Dendritic cell treated with granulocyte-macrophage colony-stimulating factor and Interleukin-4, amounts not matched to agents 40 ng/mL and 50 ng/mL, for 4 days (primary cell): ENCODE measurements at regions of chr7 and their contacts with region 1.

Region 1: DNA sequence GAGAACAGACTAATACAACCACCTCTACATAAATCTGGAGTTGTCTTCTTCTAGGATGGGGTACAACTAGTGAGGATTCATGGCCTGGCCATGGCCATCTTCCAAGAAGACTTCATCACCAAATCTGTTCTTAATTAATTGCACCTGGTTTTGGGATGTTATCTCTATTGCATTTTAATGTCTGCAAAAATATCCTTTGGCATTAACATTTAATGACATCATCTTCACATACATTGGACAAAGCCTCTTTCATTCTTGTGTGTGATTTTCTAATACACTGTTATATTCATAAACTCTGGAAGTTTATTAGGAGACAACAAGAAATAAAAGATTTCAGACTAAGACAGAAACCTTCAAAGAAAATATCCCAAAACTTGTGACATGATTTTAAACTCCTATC is 124.2 kb upstream of the ABCB5 start:
- H3K4me3 Mint-ChIP-seq: no peak overlapping the region
- H3K27ac Mint-ChIP-seq: no peak overlapping the region
- H3K4me1 Mint-ChIP-seq: no peaks in the 10 kb centered on the region
- H3K27me3 Mint-ChIP-seq: no peaks in the 10 kb centered on the region

Region 2: DNA sequence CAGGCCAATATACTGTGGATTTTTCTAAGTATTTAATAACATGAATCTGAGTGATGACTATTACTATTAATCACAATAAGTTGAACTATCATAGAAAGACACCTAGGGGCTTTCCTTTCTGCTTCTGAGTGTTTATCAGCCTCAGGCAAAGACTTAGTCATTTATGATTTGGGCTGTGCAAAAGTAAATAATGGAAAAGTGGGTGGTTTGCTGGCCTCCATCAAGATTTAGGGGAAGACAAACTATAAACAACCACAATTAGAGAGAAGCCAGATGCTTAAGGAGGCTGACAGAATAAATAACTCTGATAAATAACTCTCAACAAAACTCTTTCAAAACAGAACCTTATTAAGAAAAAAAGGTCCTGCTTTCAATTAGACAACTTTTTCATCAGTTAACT is 338.8 kb before region 1 on chr7:
- intact Hi-C with region 1: no loop called
- H3K4me3 Mint-ChIP-seq: no peak overlapping the region
- H3K27ac Mint-ChIP-seq: no peak overlapping the region
- H3K4me1 Mint-ChIP-seq: peaks cover 24% of the 10 kb centered on the region
- H3K27me3 Mint-ChIP-seq: no peaks in the 10 kb centered on the region

Region 3: GRCh38 chr7:20412032-20412431 is 79.3 kb before region 1 on chr7:
- intact Hi-C with region 1: loop called (anchors 5 kb)
- H3K4me3 Mint-ChIP-seq: no peak overlapping the region
- H3K27ac Mint-ChIP-seq: no peak overlapping the region
- H3K4me1 Mint-ChIP-seq: peaks cover 14% of the 10 kb centered on the region
- H3K27me3 Mint-ChIP-seq: no peaks in the 10 kb centered on the region

Region 4: GRCh38 chr7:20508109-20508508 is 16.8 kb after region 1 on chr7:
- intact Hi-C with region 1: loop called (anchors 2 kb)
- H3K4me3 Mint-ChIP-seq: no peak overlapping the region
- H3K27ac Mint-ChIP-seq: no peak overlapping the region
- H3K4me1 Mint-ChIP-seq: peaks cover 25% of the 10 kb centered on the region
- H3K27me3 Mint-ChIP-seq: peaks cover 10% of the 10 kb centered on the region